Calu3 (cell line): ENCODE measurements at regions of chr9 and their contacts with region 1.

Region 1: GRCh38 chr9:75001719-75002422 is 26.2 kb downstream of the CARNMT1 start:
- DNase-seq: peak; percentile 4
- H3K4me3 Mint-ChIP-seq: no peak overlapping the region
- H3K27ac Mint-ChIP-seq: no peak overlapping the region
- H3K4me1 Mint-ChIP-seq: no peaks in the 10 kb centered on the region
- H3K27me3 Mint-ChIP-seq: no peaks in the 10 kb centered on the region
- CTCF ChIP-seq: peak; percentile 60

Region 2: GRCh38 chr9:74773886-74774479 is 227.9 kb before region 1 on chr9:
- CTCF ChIA-PET with region 1: no interaction called
- intact Hi-C with region 1: loop called (anchors 1 kb)
- DNase-seq: peak; percentile 51
- H3K4me3 Mint-ChIP-seq: no peak overlapping the region
- H3K27ac Mint-ChIP-seq: no peak overlapping the region
- H3K4me1 Mint-ChIP-seq: no peaks in the 10 kb centered on the region
- H3K27me3 Mint-ChIP-seq: peaks cover 27% of the 10 kb centered on the region
- CTCF ChIP-seq: peak; percentile 48

Region 3: DNA sequence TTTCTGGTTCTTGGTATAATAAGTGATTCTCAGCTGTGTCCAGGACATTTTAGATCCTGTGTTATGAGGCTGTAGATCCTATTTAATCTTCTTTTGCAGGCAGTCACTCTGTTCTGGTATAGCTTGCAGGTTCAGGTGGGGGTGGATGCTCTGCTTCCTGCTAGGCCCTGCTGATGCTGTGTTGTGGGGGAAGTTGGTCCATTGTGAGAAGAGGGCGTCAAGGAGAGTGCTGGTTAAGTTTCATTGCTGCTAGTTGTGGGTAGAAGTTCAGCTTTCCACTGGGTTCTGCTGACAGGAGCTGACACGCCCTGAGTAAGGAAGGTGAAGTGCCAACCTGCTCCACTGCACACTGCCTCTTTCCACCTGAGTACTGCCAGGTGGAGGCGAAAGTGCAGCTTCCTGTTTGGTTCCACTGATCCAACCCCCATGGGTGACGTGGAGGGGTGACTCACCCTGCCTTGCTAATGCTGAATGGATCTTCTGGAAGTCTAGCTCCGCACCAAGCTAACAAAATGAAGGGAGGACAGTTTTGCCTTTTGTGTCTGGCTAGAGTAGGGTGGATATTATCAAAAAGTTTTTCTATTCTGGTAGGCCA is 69.8 kb after region 1 on chr9:
- CTCF ChIA-PET with region 1: no interaction called
- intact Hi-C with region 1: loop called (anchors 2 kb)
- DNase-seq: peak; percentile 12
- H3K4me3 Mint-ChIP-seq: no peak overlapping the region
- H3K27ac Mint-ChIP-seq: no peak overlapping the region
- H3K4me1 Mint-ChIP-seq: no peaks in the 10 kb centered on the region
- H3K27me3 Mint-ChIP-seq: no peaks in the 10 kb centered on the region
- CTCF ChIP-seq: no peak